Psoas muscle (tissue), 8 donors: ENCODE measurements at regions of chr1 and their contacts with region 1.

Region 1: DNA sequence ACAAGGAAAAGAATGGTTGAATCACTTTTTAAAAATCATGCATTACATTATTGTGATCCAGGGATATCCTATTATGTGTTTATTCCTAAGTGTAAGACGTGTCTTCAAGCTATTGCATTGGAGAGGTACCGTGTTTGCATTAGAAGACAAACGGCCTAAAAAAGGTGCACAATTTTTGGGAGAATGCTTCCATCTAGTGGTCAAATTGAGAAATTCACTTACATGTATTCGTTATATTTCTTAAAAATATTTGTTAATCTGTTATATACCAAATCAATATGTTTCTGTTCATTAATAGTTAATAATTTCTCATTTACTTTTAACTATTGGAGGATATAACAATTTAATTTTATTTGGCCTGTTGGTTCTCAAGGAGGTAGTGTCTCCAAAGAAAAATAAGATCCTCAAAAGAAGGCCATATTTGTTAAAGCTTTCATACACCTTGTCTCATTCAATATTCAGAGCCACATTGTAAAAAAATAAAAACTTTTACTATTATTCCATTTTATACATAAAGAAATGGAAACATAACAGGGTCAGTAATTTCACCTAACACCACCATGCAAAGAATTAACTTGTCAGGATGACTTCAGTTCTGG is 40.5 kb upstream of the KCTD3 start:
- DNase-seq: no peak
- ATAC-seq: peak in 1 of 4 donors; percentile 54
- H3K4me3 ChIP-seq: no peak overlapping the region
- H3K27ac ChIP-seq: no peak overlapping the region
- H3K4me1 ChIP-seq: no peaks in the 10 kb centered on the region
- H3K27me3 ChIP-seq: no peaks in the 10 kb centered on the region
- CTCF ChIP-seq: peak; percentile 76

Region 2: GRCh38 chr1:214632091-214632490 is 894.6 kb before region 1 on chr1:
- intact Hi-C with region 1: loop called in 1 of 2 experiments (anchors 2 kb)
- DNase-seq: no peak
- ATAC-seq: no peak
- H3K4me3 ChIP-seq: no peak overlapping the region
- H3K27ac ChIP-seq: no peak overlapping the region
- H3K4me1 ChIP-seq: peaks cover 3% of the 10 kb centered on the region
- H3K27me3 ChIP-seq: no peaks in the 10 kb centered on the region
- CTCF ChIP-seq: no peak

Region 3: DNA sequence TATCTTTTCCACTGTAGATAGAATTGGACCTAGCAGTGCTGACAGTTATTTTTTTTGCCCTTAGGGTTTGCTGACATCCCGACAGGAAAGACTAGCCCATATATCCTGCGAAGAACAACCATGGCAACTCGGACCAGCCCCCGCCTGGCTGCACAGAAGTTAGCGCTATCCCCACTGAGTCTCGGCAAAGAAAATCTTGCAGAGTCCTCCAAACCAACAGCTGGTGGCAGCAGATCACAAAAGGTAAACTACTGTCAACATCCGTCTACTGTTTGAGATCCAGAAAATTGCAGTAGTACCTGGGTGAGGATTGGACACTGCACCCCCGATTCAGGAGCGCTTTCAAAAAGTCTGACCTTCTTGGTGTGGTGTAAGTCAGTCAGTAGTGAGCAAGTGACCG is 867.9 kb before region 1 on chr1:
- intact Hi-C with region 1: loop called in 1 of 2 experiments (anchors 5 kb)
- DNase-seq: no peak
- ATAC-seq: no peak
- H3K4me3 ChIP-seq: no peak overlapping the region
- H3K27ac ChIP-seq: no peak overlapping the region
- H3K4me1 ChIP-seq: no peaks in the 10 kb centered on the region
- H3K27me3 ChIP-seq: no peaks in the 10 kb centered on the region
- CTCF ChIP-seq: no peak

Region 4: GRCh38 chr1:214808845-214809460 is 717.7 kb before region 1 on chr1:
- intact Hi-C with region 1: loop called in 1 of 2 experiments (anchors 10 kb)
- DNase-seq: no peak
- ATAC-seq: no peak
- H3K4me3 ChIP-seq: no peak overlapping the region
- H3K27ac ChIP-seq: no peak overlapping the region
- H3K4me1 ChIP-seq: no peaks in the 10 kb centered on the region
- H3K27me3 ChIP-seq: no peaks in the 10 kb centered on the region
- CTCF ChIP-seq: no peak